ENCODE measurements at regions of chr9 and their contacts with region 1.

Region 1: GRCh38 chr9:86639899-86640379 is 285.7 kb upstream of the TUT7 start:
- DNase-seq: no peak

Region 2: GRCh38 chr9:86655147-86655546 is 15.2 kb after region 1 on chr9:
- intact Hi-C with region 1: no loop called
- DNase-seq: no peak

Region 3: GRCh38 chr9:88514247-88514646 is 1874.3 kb after region 1 on chr9:
- intact Hi-C with region 1: loop called in 1 of 2 experiments (anchors 5 kb)
- DNase-seq: peak; percentile 22